Ascending aorta (tissue), 2 donors: ENCODE measurements at regions of chr17 and their contacts with region 1.

Region 1: DNA sequence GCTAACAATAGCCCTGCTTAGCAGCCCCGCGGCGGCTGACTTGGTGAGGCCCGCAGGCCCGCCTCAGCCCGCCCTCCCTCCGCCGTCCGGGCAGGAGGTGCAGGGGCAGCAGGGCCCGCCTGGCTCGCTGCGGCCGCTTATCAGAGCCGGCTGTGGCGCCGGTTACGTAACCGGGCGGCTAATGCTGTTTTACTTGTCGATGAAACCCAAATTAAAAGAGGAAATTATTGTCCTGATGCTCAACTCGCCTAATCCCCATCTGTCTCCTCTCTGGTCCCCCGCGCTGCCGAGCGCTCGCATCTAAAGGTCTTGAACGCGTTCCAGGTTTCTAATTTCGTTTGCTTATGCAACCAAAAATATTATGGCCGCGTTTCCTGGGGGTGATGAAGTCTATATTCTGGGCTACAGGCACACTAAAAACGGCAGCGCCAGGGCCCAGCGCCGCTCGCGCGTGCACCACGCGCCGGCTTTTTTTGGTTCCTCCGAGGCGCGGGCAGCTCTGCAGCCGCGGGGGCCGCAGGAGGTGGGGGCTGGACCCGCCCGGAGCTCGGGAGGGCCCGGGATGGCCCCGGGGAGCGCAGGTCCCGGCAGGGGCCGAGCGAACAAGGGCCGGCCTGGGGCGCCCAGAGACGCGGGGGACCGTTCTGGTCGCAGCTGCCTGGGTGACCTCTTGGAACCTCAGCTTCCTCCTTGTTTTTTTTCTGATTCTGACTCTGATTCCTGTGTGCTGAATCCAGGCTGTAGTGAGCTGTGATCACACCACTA is 65.2 kb upstream of the TOB1 start:
- DNase-seq: peak; percentile 79 to 96
- H3K4me3 ChIP-seq: peak overlapping the region; percentile 47 to 63
- H3K27ac ChIP-seq: peak overlapping the region; percentile 96 to 98
- H3K4me1 ChIP-seq: peaks cover 18 to 38% of the 10 kb centered on the region in 2 donors
- H3K27me3 ChIP-seq: no peaks in the 10 kb centered on the region
- CTCF ChIP-seq: no peak

Region 2: GRCh38 chr17:50527155-50527762 is 404.1 kb before region 1 on chr17:
- intact Hi-C with region 1: no loop called
- DNase-seq: no peak
- H3K4me3 ChIP-seq: no peak overlapping the region
- H3K27ac ChIP-seq: no peak overlapping the region
- H3K4me1 ChIP-seq: no peaks in the 10 kb centered on the region
- H3K27me3 ChIP-seq: peaks cover under 1% of the 10 kb centered on the region
- CTCF ChIP-seq: no peak

Region 3: DNA sequence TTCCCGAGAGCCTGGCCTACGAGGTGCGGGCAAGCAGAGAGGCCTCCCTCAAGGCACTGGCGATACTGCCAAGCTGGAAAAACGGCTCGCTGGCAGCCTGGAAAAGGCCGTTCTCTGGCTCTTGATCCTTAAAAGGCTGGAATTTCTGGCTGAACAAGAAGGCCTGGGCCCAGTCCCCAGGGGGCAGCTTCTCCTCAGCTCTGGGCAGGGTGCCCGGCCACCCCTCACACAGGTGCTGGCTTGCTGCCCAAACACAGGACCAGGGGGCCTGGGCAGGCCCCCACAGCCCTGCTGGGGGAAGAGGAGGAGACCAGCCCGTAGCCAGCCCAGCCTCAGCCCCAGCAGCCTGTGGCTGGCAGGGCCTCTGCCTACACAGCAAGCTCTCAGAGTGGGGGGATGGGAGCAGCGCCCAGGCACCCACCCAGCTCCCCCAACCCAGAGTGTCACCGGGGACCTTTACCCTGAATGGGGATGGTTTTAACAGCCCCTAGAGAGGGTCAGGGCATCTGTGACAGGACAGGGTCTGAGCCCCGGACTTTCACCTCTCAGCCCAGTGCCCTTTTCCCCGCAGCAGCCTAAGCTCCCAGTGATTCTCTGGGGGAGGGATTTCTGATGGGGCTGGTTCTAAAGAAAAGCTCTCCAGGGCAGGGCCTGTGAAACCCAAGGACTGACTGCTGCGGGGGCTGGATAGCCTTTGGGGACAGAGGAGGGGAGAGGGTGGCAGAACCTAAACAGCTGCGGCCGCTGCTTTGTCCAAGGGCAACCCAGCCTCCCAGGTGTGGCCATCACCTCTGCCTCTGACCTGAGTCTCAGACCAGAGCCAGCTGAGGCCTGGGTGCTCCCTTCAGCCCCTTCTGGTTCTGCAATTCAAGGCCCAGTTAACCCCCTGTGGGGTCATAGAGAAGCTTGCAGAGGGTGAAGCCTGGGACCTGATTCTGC is 26.5 kb before region 1 on chr17:
- intact Hi-C with region 1: loop called (anchors 1 kb)
- DNase-seq: peak in 1 of 2 donors; percentile 82
- H3K4me3 ChIP-seq: no peak overlapping the region
- H3K27ac ChIP-seq: peak overlapping the region; percentile 95 to 99
- H3K4me1 ChIP-seq: peaks cover 13 to 26% of the 10 kb centered on the region in 2 donors
- H3K27me3 ChIP-seq: no peaks in the 10 kb centered on the region
- CTCF ChIP-seq: no peak

Region 4: DNA sequence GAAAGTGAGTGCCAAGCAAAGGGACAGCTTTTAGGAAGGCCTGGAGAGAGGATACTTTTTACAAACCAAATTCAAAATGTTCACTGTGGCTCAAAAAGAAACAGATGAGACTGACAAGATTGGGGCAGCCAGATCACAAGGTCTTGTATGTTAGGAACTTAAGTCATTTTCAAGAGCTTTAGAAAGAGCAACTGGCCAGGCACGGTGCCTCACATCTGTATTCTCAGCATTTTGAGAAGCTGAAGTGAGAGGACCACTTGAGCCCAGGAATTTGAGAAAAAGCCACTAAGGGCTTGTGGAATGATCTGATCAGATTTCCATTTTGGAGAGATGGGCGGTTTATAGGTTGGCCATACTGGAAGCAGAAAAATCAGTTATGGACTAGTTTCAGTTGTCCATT is 172.1 kb after region 1 on chr17:
- intact Hi-C with region 1: no loop called
- DNase-seq: no peak
- H3K4me3 ChIP-seq: no peak overlapping the region
- H3K27ac ChIP-seq: no peak overlapping the region
- H3K4me1 ChIP-seq: peaks cover 0 to 18% of the 10 kb centered on the region in 2 donors
- H3K27me3 ChIP-seq: no peaks in the 10 kb centered on the region
- CTCF ChIP-seq: no peak